Activated CD4-positive, alpha-beta memory T cell treated with anti-CD3 and anti-CD28 coated beads for 36 hours (primary cell): ENCODE measurements at regions of chr5 and their contacts with region 1.

Region 1: DNA sequence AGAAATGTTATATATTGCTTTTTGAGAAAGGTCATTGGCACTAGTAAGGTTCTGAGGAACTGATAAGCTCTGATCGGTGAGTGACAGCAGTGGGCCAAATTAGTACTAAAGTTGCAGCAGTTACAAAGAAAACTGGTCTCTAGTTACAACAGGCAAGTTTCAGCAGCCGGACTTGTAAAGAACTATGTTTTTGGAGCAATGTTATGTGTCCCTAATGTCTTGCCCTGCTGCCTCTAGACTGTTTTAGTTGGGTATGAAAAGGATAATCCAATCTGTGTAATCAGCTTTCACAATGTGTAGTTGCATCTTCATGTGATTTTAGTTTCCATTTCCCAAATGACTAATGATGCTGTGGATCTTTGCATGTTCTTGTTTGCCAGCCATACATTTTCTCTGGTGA is 113.5 kb downstream of the CAMK4 start:
- DNase-seq: peak; percentile 9
- H3K4me3 Mint-ChIP-seq: no peak overlapping the region
- H3K27ac Mint-ChIP-seq: peak overlapping the region; percentile 76
- H3K4me1 Mint-ChIP-seq: peaks cover 70% of the 10 kb centered on the region
- H3K27me3 Mint-ChIP-seq: no peaks in the 10 kb centered on the region

Region 2: GRCh38 chr5:110823571-110823970 is 514.1 kb before region 1 on chr5:
- CTCF ChIA-PET with region 1: no interaction called
- POLR2A ChIA-PET with region 1: no interaction called
- intact Hi-C with region 1: no loop called
- DNase-seq: no peak
- H3K4me3 Mint-ChIP-seq: no peak overlapping the region
- H3K27ac Mint-ChIP-seq: no peak overlapping the region
- H3K4me1 Mint-ChIP-seq: no peaks in the 10 kb centered on the region
- H3K27me3 Mint-ChIP-seq: no peaks in the 10 kb centered on the region

Region 3: DNA sequence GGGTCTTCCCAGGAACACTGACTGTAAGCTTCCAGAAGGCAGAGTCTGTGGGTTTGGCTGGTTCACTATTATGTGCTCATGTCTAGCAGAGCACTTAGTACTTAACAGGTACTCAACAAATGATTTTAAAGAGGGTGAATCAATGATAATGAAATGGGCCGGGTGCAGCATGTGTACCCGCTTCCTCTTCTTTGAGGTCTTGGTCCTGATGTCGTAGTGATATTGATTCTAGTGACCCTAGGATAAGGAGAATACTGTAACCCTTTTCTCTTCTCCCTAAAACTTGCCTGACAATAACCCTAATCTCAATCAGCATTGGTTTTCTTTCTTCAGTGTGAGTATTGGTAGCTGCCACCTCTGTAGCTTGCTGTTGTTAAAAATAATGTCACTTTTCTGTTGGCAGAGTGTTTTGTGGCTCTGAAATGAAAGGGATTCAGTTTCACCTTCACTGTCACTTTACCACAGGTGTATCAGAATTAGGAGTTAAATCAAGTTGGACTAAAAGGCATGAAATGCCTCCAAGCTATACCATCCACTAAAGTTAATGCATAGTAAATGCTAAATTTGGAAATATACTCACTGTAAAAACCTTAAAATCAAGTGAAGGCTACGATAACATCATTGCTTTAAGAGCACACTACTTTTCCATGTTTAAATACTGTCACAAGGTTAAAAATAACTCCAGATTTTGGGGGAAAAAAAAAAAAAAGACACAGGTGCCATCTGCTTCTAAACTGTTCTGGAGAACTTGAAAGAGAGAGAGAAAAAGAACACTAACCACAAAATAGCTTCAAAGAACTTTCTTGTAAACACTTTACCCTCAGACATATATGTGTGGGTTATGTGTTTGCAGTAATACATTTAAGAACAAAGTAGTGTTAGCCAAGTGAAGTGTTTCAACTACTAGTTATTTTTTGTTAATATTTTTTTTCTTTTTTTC is 107.5 kb before region 1 on chr5:
- CTCF ChIA-PET with region 1: no interaction called
- POLR2A ChIA-PET with region 1: interaction called, 3 read pairs
- intact Hi-C with region 1: loop called (anchors 1 kb)
- DNase-seq: no peak
- H3K4me3 Mint-ChIP-seq: peak overlapping the region; percentile 66
- H3K27ac Mint-ChIP-seq: peak overlapping the region; percentile 85
- H3K4me1 Mint-ChIP-seq: peaks cover 81% of the 10 kb centered on the region
- H3K27me3 Mint-ChIP-seq: no peaks in the 10 kb centered on the region

Region 4: GRCh38 chr5:111299831-111300432 is 37.8 kb before region 1 on chr5:
- CTCF ChIA-PET with region 1: no interaction called
- POLR2A ChIA-PET with region 1: no interaction called
- intact Hi-C with region 1: loop called (anchors 5 kb)
- DNase-seq: no peak
- H3K4me3 Mint-ChIP-seq: peak overlapping the region; percentile 42
- H3K27ac Mint-ChIP-seq: peak overlapping the region; percentile 46
- H3K4me1 Mint-ChIP-seq: peaks cover 32% of the 10 kb centered on the region
- H3K27me3 Mint-ChIP-seq: no peaks in the 10 kb centered on the region

Region 5: GRCh38 chr5:111313017-111313724 is 24.5 kb before region 1 on chr5:
- CTCF ChIA-PET with region 1: interaction called, 3 read pairs
- POLR2A ChIA-PET with region 1: interaction called, 7 read pairs
- intact Hi-C with region 1: loop called (anchors 1 kb)
- DNase-seq: no peak
- H3K4me3 Mint-ChIP-seq: no peak overlapping the region
- H3K27ac Mint-ChIP-seq: peak overlapping the region; percentile 33
- H3K4me1 Mint-ChIP-seq: peaks cover 76% of the 10 kb centered on the region
- H3K27me3 Mint-ChIP-seq: no peaks in the 10 kb centered on the region

Region 6: GRCh38 chr5:111530298-111530740 is 192.6 kb after region 1 on chr5:
- CTCF ChIA-PET with region 1: interaction called, 3 read pairs
- POLR2A ChIA-PET with region 1: no interaction called
- intact Hi-C with region 1: loop called (anchors 5 kb)
- DNase-seq: peak; percentile 88
- H3K4me3 Mint-ChIP-seq: peak overlapping the region; percentile 54
- H3K27ac Mint-ChIP-seq: peak overlapping the region; percentile 85
- H3K4me1 Mint-ChIP-seq: peaks cover 17% of the 10 kb centered on the region
- H3K27me3 Mint-ChIP-seq: no peaks in the 10 kb centered on the region